ENCODE measurements at regions of chr6 and their contacts with region 1.

Region 1: GRCh38 chr6:85612690-85613474 is 19.2 kb upstream of the SNX14 start:
- DNase-seq: no peak
- H3K4me3 Mint-ChIP-seq: no peak overlapping the region
- H3K27ac Mint-ChIP-seq: no peak overlapping the region
- H3K4me1 Mint-ChIP-seq: peaks cover 12% of the 10 kb centered on the region
- H3K27me3 Mint-ChIP-seq: no peaks in the 10 kb centered on the region

Region 2: GRCh38 chr6:85364344-85364743 is 248.5 kb before region 1 on chr6:
- CTCF ChIA-PET with region 1: no interaction called
- POLR2A ChIA-PET with region 1: no interaction called
- DNase-seq: no peak
- H3K4me3 Mint-ChIP-seq: no peak overlapping the region
- H3K27ac Mint-ChIP-seq: no peak overlapping the region
- H3K4me1 Mint-ChIP-seq: no peaks in the 10 kb centered on the region
- H3K27me3 Mint-ChIP-seq: peaks cover 9% of the 10 kb centered on the region

Region 3: GRCh38 chr6:85637579-85637978 is 24.7 kb after region 1 on chr6:
- CTCF ChIA-PET with region 1: interaction called, 5 read pairs
- POLR2A ChIA-PET with region 1: interaction called, 15 read pairs
- DNase-seq: no peak
- H3K4me3 Mint-ChIP-seq: no peak overlapping the region
- H3K27ac Mint-ChIP-seq: no peak overlapping the region
- H3K4me1 Mint-ChIP-seq: peaks cover 60% of the 10 kb centered on the region
- H3K27me3 Mint-ChIP-seq: no peaks in the 10 kb centered on the region

Region 4: GRCh38 chr6:85756982-85757381 is 144.1 kb after region 1 on chr6:
- CTCF ChIA-PET with region 1: no interaction called
- POLR2A ChIA-PET with region 1: no interaction called
- DNase-seq: no peak
- H3K4me3 Mint-ChIP-seq: no peak overlapping the region
- H3K27ac Mint-ChIP-seq: no peak overlapping the region
- H3K4me1 Mint-ChIP-seq: no peaks in the 10 kb centered on the region
- H3K27me3 Mint-ChIP-seq: peaks cover 23% of the 10 kb centered on the region

Region 5: GRCh38 chr6:85923013-85923430 is 310.1 kb after region 1 on chr6:
- CTCF ChIA-PET with region 1: no interaction called
- POLR2A ChIA-PET with region 1: no interaction called
- DNase-seq: no peak
- H3K4me3 Mint-ChIP-seq: no peak overlapping the region
- H3K27ac Mint-ChIP-seq: no peak overlapping the region
- H3K4me1 Mint-ChIP-seq: no peaks in the 10 kb centered on the region
- H3K27me3 Mint-ChIP-seq: no peaks in the 10 kb centered on the region

Measured in activated CD4-positive, alpha-beta memory T cell treated with anti-CD3 and anti-CD28 coated beads, Interleukin-2, amount 10 ng/mL, durations not matched to agents 7 days and 5 days (primary cell).